A673 (cell line): ENCODE measurements at regions of chr2 and their contacts with region 1.

Region 1: DNA sequence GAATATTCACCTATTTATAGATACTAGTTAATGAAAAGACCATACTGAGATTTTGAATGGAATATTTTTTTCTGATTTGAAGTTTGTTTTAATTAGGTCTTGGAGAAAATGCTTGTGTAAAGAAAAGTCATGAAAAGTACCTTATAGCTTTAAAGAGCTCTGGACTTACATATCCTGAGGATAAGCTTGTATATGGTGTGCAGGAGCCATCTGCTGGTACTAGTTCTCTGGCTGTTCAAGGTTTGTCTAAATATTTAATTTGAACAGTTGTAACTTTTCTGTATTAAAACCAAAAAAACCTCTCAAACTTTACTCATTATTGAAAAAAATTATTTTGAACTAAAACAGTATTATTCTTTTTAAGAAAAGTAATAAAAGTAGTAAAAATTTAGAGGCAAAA is 50.1 kb downstream of the UBR3 start:
- DNase-seq: peak; percentile 10
- H3K4me3 ChIP-seq: no peak overlapping the region
- H3K27ac ChIP-seq: no peak overlapping the region
- H3K4me1 ChIP-seq: no peaks in the 10 kb centered on the region
- H3K27me3 ChIP-seq: no peaks in the 10 kb centered on the region
- CTCF ChIP-seq: peak; percentile 55

Region 2: DNA sequence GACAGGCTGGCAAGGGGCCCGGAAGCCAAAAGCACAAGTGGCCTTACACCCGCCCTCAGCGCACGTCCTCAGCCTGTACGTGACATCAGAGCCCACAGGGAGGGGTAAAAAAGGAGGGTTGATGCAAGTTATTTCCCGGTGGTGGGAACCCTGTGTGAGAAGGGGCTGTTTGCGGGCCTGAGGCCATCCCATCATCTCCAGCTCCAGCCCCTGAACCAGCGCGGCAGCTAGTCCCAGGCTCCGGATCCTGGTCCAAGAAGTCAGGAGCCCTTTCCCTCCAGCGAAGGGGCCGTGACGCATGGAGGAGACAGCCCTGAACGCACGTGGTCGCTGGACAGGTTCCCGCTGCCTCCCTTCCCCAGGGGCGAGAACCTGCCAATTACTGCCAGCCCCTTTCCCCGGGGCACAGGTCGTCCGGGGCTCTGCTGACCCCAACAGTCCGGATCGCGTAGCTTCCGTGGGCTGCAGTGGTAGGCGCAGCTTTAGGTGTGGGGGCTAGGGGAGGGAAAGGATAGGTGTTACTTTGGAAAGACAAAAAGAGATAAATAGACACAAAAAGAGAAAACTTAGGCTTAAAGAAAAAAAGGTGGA is 513.7 kb before region 1 on chr2:
- CTCF ChIA-PET with region 1: no interaction called
- POLR2A ChIA-PET with region 1: no interaction called
- intact Hi-C with region 1: no loop called
- DNase-seq: no peak
- H3K4me3 ChIP-seq: peak overlapping the region; percentile 40
- H3K27ac ChIP-seq: no peak overlapping the region
- H3K4me1 ChIP-seq: peaks cover 31% of the 10 kb centered on the region
- H3K27me3 ChIP-seq: peaks cover 81% of the 10 kb centered on the region
- CTCF ChIP-seq: no peak

Region 3: GRCh38 chr2:169619946-169620345 is 257.5 kb before region 1 on chr2:
- CTCF ChIA-PET with region 1: no interaction called
- POLR2A ChIA-PET with region 1: no interaction called
- intact Hi-C with region 1: no loop called
- DNase-seq: no peak
- H3K4me3 ChIP-seq: no peak overlapping the region
- H3K27ac ChIP-seq: no peak overlapping the region
- H3K4me1 ChIP-seq: no peaks in the 10 kb centered on the region
- H3K27me3 ChIP-seq: no peaks in the 10 kb centered on the region
- CTCF ChIP-seq: no peak

Region 4: DNA sequence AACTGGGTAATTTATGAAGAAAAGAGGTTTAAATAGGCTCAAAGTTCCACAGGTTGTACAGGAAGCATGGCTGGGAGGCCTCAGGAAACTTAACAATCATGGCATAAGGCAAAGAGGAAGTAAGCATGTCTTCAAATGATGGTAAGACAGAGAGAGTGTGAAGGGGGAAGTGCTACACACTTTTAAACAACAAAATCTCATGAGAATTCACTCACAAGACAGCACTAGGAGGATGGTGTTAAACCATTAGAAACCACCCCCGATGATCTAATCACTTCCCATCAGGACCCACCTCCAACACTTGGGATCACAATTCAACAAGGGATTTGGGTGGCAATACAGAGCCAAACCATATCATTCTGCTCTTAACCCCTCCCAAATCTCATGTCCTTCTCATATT is 218.1 kb before region 1 on chr2:
- CTCF ChIA-PET with region 1: no interaction called
- POLR2A ChIA-PET with region 1: no interaction called
- intact Hi-C with region 1: no loop called
- DNase-seq: peak; percentile 28
- H3K4me3 ChIP-seq: no peak overlapping the region
- H3K27ac ChIP-seq: no peak overlapping the region
- H3K4me1 ChIP-seq: peaks cover 6% of the 10 kb centered on the region
- H3K27me3 ChIP-seq: peaks cover under 1% of the 10 kb centered on the region
- CTCF ChIP-seq: no peak

Region 5: DNA sequence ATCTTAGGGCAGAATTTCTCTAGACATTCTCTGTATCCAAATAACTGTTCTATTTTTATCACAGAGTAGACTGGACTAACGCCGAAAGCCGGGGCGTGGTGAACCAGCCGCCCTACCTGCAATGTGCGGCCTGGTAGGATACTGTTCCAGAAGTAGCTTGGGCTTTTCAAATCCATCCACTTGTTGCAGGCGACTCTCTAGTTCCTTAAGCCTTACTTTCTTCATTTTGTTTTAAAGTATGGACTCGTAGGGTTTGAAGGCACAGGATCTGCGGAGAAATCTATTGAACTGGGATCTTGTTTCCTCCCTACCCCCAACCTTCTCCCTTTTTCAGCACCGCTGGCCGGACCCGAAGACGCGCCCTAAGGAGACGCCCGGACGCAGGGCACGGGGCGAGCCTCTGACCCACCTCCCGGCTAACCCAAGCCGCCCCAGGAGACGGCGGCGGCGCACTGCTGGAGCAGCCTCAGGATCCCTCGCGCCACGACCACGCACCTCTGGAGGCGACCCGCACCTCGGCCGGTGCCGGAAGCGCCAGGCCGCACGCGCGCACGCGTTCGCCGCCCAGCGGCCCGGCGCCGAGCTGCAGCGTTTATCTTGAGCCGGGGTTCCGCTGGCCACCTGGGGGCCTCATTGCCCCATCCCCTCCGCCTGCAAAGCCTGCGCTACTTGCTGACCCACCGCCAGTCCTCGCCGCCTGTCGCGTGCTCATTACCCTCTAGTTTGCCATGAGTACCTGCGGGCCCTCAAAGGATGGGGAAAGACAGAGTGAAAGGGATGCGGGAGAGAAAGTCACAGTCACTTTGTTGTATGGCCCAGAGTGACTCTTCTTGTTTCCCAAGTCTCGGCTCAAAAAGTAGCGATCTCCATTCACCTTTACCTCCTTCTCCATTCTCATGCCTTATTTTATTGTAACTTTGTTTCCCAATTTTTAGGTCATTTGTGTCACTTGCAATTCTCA is 52.7 kb before region 1 on chr2 and contains the start of gene METTL5:
- CTCF ChIA-PET with region 1: interaction called, 4 read pairs
- POLR2A ChIA-PET with region 1: no interaction called
- intact Hi-C with region 1: loop called (anchors 5 kb)
- DNase-seq: peak; percentile 85
- H3K4me3 ChIP-seq: peak within 1 kb of the TSS; percentile 87
- H3K27ac ChIP-seq: peak within 1 kb of the TSS; percentile 79
- H3K4me1 ChIP-seq: peaks cover 17% of the 10 kb centered on the region
- H3K27me3 ChIP-seq: no peaks in the 10 kb centered on the region
- CTCF ChIP-seq: peak; percentile 85
- total RNA-seq, gene METTL5: 97.3 and 107 TPM in 2 replicates

Region 6: DNA sequence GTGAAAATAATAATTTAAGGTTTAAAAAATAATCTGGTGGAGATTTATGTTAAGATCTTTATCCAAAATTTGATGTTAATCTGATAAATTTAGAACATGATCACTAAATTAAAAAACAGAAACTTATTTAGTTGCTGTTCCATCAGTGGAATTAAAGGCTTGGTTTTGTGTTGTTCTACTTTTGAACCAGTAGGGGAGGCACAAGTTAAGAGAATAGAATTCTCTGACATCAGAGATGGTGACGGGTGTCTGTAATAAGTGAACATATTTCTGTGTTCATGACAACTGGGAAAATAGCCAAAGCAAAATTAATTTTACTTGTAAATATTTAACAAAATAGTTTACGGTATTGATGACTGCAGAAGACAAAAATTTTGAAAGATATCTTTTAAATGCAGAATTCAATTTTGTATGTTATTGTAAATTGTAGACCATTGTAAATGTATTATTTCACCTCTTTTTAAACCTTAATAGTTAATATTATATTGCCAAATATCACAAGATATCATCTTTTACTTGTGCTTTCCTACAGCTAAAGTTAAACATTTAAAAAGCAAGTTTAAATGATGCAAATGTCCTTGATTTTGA is 55.8 kb after region 1 on chr2:
- CTCF ChIA-PET with region 1: no interaction called
- POLR2A ChIA-PET with region 1: no interaction called
- intact Hi-C with region 1: no loop called
- DNase-seq: peak; percentile 67
- H3K4me3 ChIP-seq: no peak overlapping the region
- H3K27ac ChIP-seq: no peak overlapping the region
- H3K4me1 ChIP-seq: no peaks in the 10 kb centered on the region
- H3K27me3 ChIP-seq: no peaks in the 10 kb centered on the region
- CTCF ChIP-seq: peak; percentile 78